Left colon (tissue), 2 donors: ENCODE measurements at regions of chr17 and their contacts with region 1.

Region 1: GRCh38 chr17:31702041-31702440 is 157.0 kb downstream of the COPRS start:
- DNase-seq: no peak
- ATAC-seq: no peak

Region 2: GRCh38 chr17:31825961-31826691 is 124.1 kb after region 1 on chr17:
- intact Hi-C with region 1: loop called in 1 of 2 experiments (anchors 10 kb)
- DNase-seq: peak in 1 of 2 donors; percentile 37
- ATAC-seq: peak; percentile 64